ENCODE measurements at regions of chr16 and their contacts with region 1.

Region 1: GRCh38 chr16:74601126-74601871 is 5.6 kb downstream of the GLG1 start:
- DNase-seq: no peak
- ATAC-seq: peak; percentile 89
- H3K4me3 ChIP-seq: peak overlapping the region; percentile 38; the same call in 1 of the 2 replicates
- H3K27ac ChIP-seq: peak overlapping the region; percentile 55; the same call in 1 of the 2 replicates
- H3K4me1 ChIP-seq: peaks cover 11% of the 10 kb centered on the region; the same call in 1 of the 2 replicates
- H3K27me3 ChIP-seq: no peaks in the 10 kb centered on the region
- CTCF ChIP-seq: no peak
- EP300 ChIP-seq: no peak
- POLR2A ChIP-seq: no peak
- RAD21 ChIP-seq: no peak

Region 2: DNA sequence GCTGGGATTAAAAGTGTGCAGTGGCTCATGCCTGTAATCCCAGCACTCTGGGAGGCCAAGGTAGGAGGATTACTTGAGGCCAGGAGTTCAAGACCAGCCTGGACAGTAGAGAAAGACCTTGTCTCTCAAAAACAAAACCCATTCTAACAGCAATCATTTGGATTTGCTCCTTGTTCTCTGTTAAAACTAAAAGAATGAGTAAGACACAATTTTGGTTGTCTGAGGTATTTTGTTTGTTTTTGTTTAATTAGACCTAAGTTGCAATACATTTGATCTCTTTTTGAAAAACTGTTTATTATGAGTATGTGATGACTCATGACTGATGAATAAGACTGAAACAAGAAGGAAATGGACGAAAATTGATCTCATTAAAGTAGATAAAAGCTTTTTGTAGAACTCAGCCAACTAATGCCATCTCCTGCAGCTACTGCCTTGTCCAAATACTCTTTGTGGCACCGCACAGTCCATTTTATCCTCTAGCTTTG is 23.4 kb before region 1 on chr16:
- CTCF ChIA-PET with region 1: no interaction called
- POLR2A ChIA-PET with region 1: interaction called, 8 read pairs
- RAD21 ChIA-PET with region 1: no interaction called
- SMC1A ChIA-PET with region 1: interaction called, 21 read pairs
- in situ Hi-C with region 1: no loop called
- intact Hi-C with region 1: no loop called
- DNase-seq: peak; percentile 57
- ATAC-seq: peak; percentile 76
- H3K4me3 ChIP-seq: no peak overlapping the region; the same call in 1 of the 2 replicates
- H3K27ac ChIP-seq: peak overlapping the region; percentile 43; the same call in 1 of the 2 replicates
- H3K4me1 ChIP-seq: peaks cover 24% of the 10 kb centered on the region
- H3K27me3 ChIP-seq: no peaks in the 10 kb centered on the region
- CTCF ChIP-seq: no peak
- EP300 ChIP-seq: peak in 1 of 2 experiments; percentile 20; a peak in 1 of 4 replicates
- POLR2A ChIP-seq: no peak
- RAD21 ChIP-seq: no peak

Region 3: DNA sequence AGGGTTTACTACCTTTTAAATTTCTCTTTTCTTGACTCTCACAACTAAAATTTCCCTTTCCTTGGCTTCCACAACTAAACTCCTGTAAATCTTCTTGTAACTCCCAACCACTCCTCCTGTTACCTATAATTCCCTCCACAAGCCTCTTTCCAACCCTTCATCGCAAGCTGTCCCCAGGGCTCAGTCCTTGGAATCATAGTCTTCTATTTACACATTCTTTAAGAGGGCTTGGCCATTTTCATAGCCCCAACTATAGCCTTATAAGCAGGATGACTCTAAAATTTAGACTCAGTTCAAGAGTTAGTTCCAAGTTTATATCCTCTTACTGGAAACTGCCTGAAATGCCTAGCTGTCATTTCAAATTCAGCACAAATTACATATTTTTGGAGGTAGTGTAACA is 18.3 kb before region 1 on chr16:
- CTCF ChIA-PET with region 1: no interaction called
- POLR2A ChIA-PET with region 1: interaction called, 8 read pairs
- RAD21 ChIA-PET with region 1: interaction called, 5 read pairs
- SMC1A ChIA-PET with region 1: interaction called, 21 read pairs
- in situ Hi-C with region 1: no loop called
- intact Hi-C with region 1: no loop called
- DNase-seq: no peak
- ATAC-seq: no peak
- H3K4me3 ChIP-seq: no peak overlapping the region
- H3K27ac ChIP-seq: no peak overlapping the region; the same call in 1 of the 2 replicates
- H3K4me1 ChIP-seq: peaks cover 22% of the 10 kb centered on the region
- H3K27me3 ChIP-seq: no peaks in the 10 kb centered on the region
- CTCF ChIP-seq: no peak
- EP300 ChIP-seq: no peak
- POLR2A ChIP-seq: no peak
- RAD21 ChIP-seq: no peak

Region 4: DNA sequence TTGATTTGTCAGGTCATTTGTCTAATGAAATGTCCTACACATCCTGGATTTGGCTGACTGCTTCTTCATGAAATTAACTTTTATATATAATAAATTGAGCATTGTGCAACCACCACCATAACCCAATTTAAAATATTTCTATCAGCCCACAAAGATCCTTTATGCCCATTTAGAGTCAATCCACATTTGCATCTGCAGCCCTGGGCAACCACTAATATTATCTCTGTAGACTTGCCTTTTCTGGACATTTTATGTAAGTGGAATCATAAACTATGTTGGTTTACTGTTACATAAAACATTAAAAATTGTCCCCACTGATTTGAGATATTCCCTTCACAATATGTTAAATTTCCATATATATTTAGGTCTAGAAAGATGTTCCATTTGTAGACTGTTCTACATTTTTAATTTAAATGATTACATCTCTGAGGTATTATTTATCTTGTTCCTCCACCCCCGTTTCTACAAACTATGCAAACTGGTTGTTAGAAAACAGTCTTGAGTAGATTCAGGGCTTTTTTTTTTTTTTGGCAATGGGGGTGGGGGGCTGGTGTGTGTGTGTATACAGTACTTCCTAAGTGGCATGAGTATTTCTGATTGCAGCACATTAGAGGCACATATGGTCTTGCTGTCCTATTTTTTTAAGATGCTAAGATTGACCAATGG is 48.7 kb after region 1 on chr16:
- CTCF ChIA-PET with region 1: no interaction called
- POLR2A ChIA-PET with region 1: no interaction called
- RAD21 ChIA-PET with region 1: no interaction called
- SMC1A ChIA-PET with region 1: no interaction called
- in situ Hi-C with region 1: no loop called
- intact Hi-C with region 1: no loop called
- DNase-seq: no peak
- ATAC-seq: no peak
- H3K4me3 ChIP-seq: no peak overlapping the region
- H3K27ac ChIP-seq: no peak overlapping the region
- H3K4me1 ChIP-seq: no peaks in the 10 kb centered on the region
- H3K27me3 ChIP-seq: no peaks in the 10 kb centered on the region
- CTCF ChIP-seq: no peak
- EP300 ChIP-seq: no peak
- POLR2A ChIP-seq: no peak
- RAD21 ChIP-seq: no peak